ENCODE measurements at regions of chr2 and their contacts with region 1.

Region 1: GRCh38 chr2:85642725-85643124 is 25.3 kb downstream of the SFTPB start:
- DNase-seq: peak; percentile 36
- H3K4me3 Mint-ChIP-seq: no peak overlapping the region
- H3K27ac Mint-ChIP-seq: peak overlapping the region; percentile 69
- H3K4me1 Mint-ChIP-seq: peaks cover 13% of the 10 kb centered on the region
- H3K27me3 Mint-ChIP-seq: no peaks in the 10 kb centered on the region

Region 2: DNA sequence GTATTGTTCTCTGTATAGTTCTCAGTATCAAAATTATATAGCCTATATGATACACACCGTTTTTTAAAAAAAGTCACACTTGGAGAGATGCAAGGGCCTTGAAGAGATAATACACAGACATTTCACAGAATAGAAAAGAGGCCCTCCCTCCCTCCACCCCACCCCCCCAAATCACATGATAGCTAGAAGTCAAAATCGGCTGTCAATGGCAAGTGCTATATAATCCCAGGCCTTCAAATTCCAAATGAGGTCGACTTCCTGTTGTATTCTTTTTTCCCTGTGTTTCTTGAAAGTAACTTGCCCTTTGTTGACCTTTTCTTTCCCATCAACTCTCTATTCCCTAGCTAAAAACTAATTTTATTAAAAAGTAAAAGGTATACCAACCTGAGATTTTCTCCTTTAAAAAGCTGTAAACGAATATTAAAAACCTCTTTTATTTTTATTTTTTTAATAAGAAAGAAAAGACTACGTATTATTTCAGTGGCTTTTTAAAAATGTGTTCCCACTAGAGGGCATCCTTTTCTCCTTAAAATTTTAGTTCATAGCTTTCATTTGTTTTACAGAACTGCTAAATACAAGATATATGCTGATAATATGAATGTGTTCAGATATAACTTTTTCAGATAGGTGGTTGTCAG is 625.2 kb before region 1 on chr2:
- CTCF ChIA-PET with region 1: no interaction called
- POLR2A ChIA-PET with region 1: no interaction called
- intact Hi-C with region 1: no loop called
- DNase-seq: no peak
- H3K4me3 Mint-ChIP-seq: no peak overlapping the region
- H3K27ac Mint-ChIP-seq: peak overlapping the region; percentile 66
- H3K4me1 Mint-ChIP-seq: peaks cover 70% of the 10 kb centered on the region
- H3K27me3 Mint-ChIP-seq: no peaks in the 10 kb centered on the region

Region 3: DNA sequence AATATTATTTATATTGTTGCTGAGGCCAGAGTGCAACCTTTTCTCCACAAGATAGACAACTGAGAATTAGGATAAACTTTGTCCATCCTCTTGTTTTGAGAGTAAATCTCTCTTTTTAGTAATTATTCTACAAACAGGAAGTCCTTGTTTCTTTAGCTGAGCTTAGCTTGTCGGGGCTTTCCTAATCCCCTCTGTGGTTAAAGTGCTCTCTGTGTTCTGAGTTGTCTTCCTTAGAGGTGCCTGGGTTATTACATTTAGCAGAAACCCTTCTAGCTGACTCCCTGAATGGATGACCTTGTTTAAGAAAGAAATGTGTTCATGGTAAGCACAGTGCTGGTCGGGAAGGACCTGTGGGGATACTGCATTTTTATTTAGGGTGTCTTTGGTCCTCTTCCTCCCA is 14.1 kb before region 1 on chr2:
- CTCF ChIA-PET with region 1: interaction called, 27 read pairs
- POLR2A ChIA-PET with region 1: no interaction called
- intact Hi-C with region 1: no loop called
- DNase-seq: no peak
- H3K4me3 Mint-ChIP-seq: no peak overlapping the region
- H3K27ac Mint-ChIP-seq: peak overlapping the region; percentile 54
- H3K4me1 Mint-ChIP-seq: peaks cover 8% of the 10 kb centered on the region
- H3K27me3 Mint-ChIP-seq: no peaks in the 10 kb centered on the region

Region 4: DNA sequence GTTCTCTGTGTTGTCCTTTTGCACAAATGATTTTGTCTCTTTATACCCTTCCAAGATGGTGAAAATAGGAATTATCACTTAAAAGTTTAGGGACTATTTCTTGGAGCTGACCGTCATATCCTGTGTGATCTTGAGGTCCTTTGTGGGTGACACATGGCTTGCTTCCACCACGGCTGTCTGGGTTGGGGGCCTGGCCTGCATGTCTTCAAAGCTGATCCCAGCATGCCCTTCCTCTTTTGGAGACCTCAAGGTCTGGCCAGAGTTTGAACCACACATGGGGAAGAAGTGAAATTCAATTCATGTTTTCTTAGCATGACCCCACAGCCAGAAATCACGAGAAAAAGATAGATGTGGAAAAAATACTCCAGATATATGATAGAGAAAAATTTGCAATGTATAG is 11.3 kb after region 1 on chr2:
- CTCF ChIA-PET with region 1: interaction called, 35 read pairs
- POLR2A ChIA-PET with region 1: no interaction called
- intact Hi-C with region 1: no loop called
- DNase-seq: no peak
- H3K4me3 Mint-ChIP-seq: no peak overlapping the region
- H3K27ac Mint-ChIP-seq: no peak overlapping the region
- H3K4me1 Mint-ChIP-seq: peaks cover 2% of the 10 kb centered on the region
- H3K27me3 Mint-ChIP-seq: no peaks in the 10 kb centered on the region